ENCODE measurements at regions of chr6 and their contacts with region 1.

Region 1: GRCh38 chr6:134882426-134883038 is 67.4 kb downstream of the ALDH8A1 start:
- DNase-seq: peak; percentile 27 to 73
- ATAC-seq: peak; percentile 64 to 69 (median 68)
- H3K4me3 ChIP-seq: no peak overlapping the region
- H3K4me3 Mint-ChIP-seq: no peak overlapping the region
- H3K27ac ChIP-seq: no peak overlapping the region
- H3K27ac Mint-ChIP-seq: no peak overlapping the region
- H3K4me1 ChIP-seq: no peaks in the 10 kb centered on the region
- H3K4me1 Mint-ChIP-seq: no peaks in the 10 kb centered on the region
- H3K27me3 ChIP-seq: no peaks in the 10 kb centered on the region
- H3K27me3 Mint-ChIP-seq: peaks cover 20 to 24% of the 10 kb centered on the region in 2 donors
- CTCF ChIP-seq: peak; percentile 78

Region 2: DNA sequence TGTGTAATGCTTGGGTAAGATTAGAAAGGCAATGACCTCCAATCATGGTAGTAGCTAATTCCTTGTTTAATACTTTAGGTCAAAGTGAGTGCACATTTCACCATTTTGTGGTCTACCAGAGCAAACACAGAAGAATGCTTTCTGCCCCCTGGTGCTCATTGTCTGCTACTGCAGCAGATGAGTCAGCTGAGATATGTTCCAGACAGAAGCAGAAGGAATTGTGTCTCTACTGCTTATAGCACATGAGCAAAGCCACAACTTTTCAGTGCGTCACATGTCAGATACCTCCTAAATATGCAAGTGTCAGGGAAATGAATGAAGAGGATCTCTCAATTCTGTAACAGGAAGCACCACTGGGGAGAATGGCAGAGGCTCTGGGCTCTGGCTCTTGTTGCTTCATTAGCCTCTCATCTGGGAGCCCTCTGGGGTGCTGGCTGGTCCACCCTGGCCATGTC is 241.5 kb before region 1 on chr6:
- intact Hi-C with region 1: loop called (anchors 2 kb)
- DNase-seq: peak; percentile 55 to 90
- ATAC-seq: peak; percentile 87 to 97 (median 91)
- H3K4me3 ChIP-seq: no peak overlapping the region
- H3K4me3 Mint-ChIP-seq: no peak overlapping the region
- H3K27ac ChIP-seq: no peak overlapping the region
- H3K27ac Mint-ChIP-seq: no peak overlapping the region
- H3K4me1 ChIP-seq: no peaks in the 10 kb centered on the region
- H3K4me1 Mint-ChIP-seq: peaks cover 0 to 6% of the 10 kb centered on the region in 2 donors
- H3K27me3 ChIP-seq: no peaks in the 10 kb centered on the region
- H3K27me3 Mint-ChIP-seq: peaks cover 13 to 20% of the 10 kb centered on the region in 2 donors
- CTCF ChIP-seq: peak; percentile 92

Measured in natural killer cell (primary cell).